ENCODE measurements at regions of chr5 and their contacts with region 1.

Region 1: DNA sequence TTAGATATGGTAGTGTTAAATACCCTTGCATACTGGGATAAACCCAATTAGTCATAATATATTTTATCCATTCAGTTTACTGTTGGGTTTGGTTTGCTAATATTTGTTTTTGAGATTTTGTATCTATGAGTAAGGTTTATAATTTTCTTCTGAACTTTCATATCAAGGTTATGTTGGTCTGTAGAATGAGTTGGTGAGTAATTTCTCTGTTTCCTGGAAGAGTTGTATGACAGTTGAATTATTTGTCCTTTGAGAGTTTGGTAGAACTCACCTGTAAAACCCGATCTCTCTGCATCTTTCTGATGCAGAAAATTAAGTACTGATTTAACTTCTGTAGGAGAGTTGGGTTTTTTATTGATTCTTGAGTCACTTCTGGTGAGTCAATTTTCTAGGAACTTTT is 20.4 kb downstream of the DDX4 start:
- DNase-seq: no peak
- H3K4me3 Mint-ChIP-seq: no peak overlapping the region
- H3K27ac Mint-ChIP-seq: peak overlapping the region; percentile 23
- H3K4me1 Mint-ChIP-seq: peaks cover 20% of the 10 kb centered on the region
- H3K27me3 Mint-ChIP-seq: peaks cover 17% of the 10 kb centered on the region

Region 2: GRCh38 chr5:55724281-55724680 is 34.0 kb before region 1 on chr5:
- CTCF ChIA-PET with region 1: no interaction called
- POLR2A ChIA-PET with region 1: no interaction called
- intact Hi-C with region 1: no loop called
- DNase-seq: no peak
- H3K4me3 Mint-ChIP-seq: no peak overlapping the region
- H3K27ac Mint-ChIP-seq: no peak overlapping the region
- H3K4me1 Mint-ChIP-seq: peaks cover 3% of the 10 kb centered on the region
- H3K27me3 Mint-ChIP-seq: peaks cover 2% of the 10 kb centered on the region

Region 3: GRCh38 chr5:55903121-55903701 is 145.0 kb after region 1 on chr5:
- CTCF ChIA-PET with region 1: no interaction called
- POLR2A ChIA-PET with region 1: no interaction called
- intact Hi-C with region 1: loop called (anchors 5 kb)
- DNase-seq: peak; percentile 89
- H3K4me3 Mint-ChIP-seq: peak overlapping the region; percentile 24
- H3K27ac Mint-ChIP-seq: no peak overlapping the region
- H3K4me1 Mint-ChIP-seq: peaks cover 35% of the 10 kb centered on the region
- H3K27me3 Mint-ChIP-seq: peaks cover 2% of the 10 kb centered on the region

Region 4: GRCh38 chr5:55920784-55921183 is 162.6 kb after region 1 on chr5:
- CTCF ChIA-PET with region 1: no interaction called
- POLR2A ChIA-PET with region 1: no interaction called
- intact Hi-C with region 1: no loop called
- DNase-seq: no peak
- H3K4me3 Mint-ChIP-seq: no peak overlapping the region
- H3K27ac Mint-ChIP-seq: no peak overlapping the region
- H3K4me1 Mint-ChIP-seq: peaks cover 28% of the 10 kb centered on the region
- H3K27me3 Mint-ChIP-seq: no peaks in the 10 kb centered on the region

Measured in activated CD4-positive, alpha-beta memory T cell treated with anti-CD3 and anti-CD28 coated beads for 36 hours (primary cell).